Activated T-helper 2 cell treated with anti-CD3 and anti-CD28 coated beads, Interferon-gamma antibody, Interleukin-2, Interleukin-4, amounts not matched to agents 10 μg/mL and 5 μg/mL and 100 μg/mL, durations not matched to agents 14 hours and 24 hours and 36 hours (primary cell): ENCODE measurements at regions of chr11 and their contacts with region 1.

Region 1: GRCh38 chr11:33065445-33066178 is 26.2 kb downstream of the TCP11L1 start:
- DNase-seq: peak; percentile 54
- H3K4me3 Mint-ChIP-seq: no peak overlapping the region
- H3K27ac Mint-ChIP-seq: no peak overlapping the region
- H3K4me1 Mint-ChIP-seq: peaks cover 38% of the 10 kb centered on the region
- H3K27me3 Mint-ChIP-seq: no peaks in the 10 kb centered on the region

Region 2: DNA sequence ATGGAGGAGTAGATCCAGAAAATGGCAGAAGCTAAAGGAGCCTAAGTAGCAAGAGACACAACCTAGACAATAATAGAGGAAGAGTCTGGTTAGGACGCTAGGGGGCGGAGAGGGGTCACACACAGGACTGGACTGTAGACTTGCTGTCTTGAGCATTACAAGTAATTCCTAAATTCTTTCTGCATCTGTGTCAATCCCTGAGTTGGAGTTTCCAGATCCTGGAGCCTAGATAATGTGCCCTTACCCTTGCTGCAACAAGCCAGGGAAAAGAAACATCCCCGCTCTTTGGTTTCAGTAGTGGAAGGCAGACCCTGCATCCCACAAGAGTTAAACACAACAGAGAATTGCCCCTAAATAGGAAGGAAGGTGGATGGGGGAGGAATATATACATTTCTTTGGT is 256.3 kb before region 1 on chr11:
- intact Hi-C with region 1: loop called (anchors 1 kb)
- DNase-seq: peak; percentile 27
- H3K4me3 Mint-ChIP-seq: no peak overlapping the region
- H3K27ac Mint-ChIP-seq: no peak overlapping the region
- H3K4me1 Mint-ChIP-seq: no peaks in the 10 kb centered on the region
- H3K27me3 Mint-ChIP-seq: peaks cover 8% of the 10 kb centered on the region

Region 3: DNA sequence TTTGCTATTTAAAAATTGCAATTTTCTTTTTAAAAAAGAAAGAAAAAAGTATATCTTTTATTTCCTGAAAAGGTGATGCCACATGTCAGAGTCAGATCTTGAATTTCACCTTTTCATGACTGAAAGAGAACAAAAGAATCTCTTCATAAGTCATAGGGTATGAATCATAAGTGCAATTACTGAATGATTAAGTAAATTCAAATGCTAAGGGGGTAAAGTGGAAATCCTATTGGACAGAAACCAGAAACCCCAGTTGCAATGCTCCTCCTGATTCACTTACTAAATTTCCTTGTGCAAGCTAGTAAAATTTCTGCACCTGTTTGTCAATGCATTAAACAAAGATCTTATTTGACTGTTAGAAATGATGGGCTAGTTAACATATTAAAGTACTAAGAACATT is 244.1 kb before region 1 on chr11:
- intact Hi-C with region 1: loop called (anchors 5 kb)
- DNase-seq: no peak
- H3K4me3 Mint-ChIP-seq: no peak overlapping the region
- H3K27ac Mint-ChIP-seq: peak overlapping the region; percentile 32
- H3K4me1 Mint-ChIP-seq: peaks cover 19% of the 10 kb centered on the region
- H3K27me3 Mint-ChIP-seq: no peaks in the 10 kb centered on the region

Region 4: DNA sequence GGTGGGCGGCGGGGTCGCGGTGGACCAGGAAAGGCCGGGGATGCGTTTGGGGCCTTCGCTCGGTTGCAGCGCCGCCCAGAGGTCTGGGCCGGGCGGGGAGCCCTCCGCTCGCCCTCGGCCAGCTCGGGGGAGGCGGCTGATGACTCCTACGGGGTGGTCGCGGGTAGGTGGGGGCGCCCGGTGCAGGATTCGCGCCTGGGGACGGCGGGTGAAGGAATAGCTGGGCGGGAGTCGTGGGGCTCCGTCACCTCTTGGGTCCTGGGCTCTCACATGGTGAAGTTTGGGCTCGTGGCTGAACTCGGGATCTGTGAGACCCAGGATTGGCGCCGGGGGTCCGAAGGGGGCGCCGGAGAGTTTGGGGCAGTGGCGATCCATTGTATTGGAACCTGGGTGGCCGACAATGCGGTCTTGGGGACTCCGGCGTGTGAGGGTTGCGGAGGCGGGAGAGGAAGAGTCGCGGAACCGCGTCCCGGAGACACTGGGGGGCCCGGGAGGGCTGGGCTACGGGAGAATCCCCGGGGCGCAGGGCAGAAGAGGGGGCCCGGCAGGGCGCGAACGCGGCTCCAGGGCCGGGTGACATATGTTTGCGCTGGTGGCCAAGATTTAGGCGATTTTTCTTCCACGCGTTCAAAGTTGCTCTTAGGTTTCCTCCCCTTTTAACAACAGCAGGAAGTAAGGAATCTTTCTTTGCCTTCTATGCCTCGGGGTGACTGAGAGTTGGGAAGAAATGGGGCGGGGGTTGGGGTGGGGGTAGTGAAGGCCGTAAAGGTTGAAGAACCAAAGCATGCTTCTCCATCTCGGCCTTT is 172.1 kb before region 1 on chr11:
- intact Hi-C with region 1: loop called (anchors 1 kb)
- DNase-seq: peak; percentile 23
- H3K4me3 Mint-ChIP-seq: peak overlapping the region; percentile 98
- H3K27ac Mint-ChIP-seq: peak overlapping the region; percentile 95
- H3K4me1 Mint-ChIP-seq: peaks cover 27% of the 10 kb centered on the region
- H3K27me3 Mint-ChIP-seq: peaks cover 8% of the 10 kb centered on the region

Region 5: DNA sequence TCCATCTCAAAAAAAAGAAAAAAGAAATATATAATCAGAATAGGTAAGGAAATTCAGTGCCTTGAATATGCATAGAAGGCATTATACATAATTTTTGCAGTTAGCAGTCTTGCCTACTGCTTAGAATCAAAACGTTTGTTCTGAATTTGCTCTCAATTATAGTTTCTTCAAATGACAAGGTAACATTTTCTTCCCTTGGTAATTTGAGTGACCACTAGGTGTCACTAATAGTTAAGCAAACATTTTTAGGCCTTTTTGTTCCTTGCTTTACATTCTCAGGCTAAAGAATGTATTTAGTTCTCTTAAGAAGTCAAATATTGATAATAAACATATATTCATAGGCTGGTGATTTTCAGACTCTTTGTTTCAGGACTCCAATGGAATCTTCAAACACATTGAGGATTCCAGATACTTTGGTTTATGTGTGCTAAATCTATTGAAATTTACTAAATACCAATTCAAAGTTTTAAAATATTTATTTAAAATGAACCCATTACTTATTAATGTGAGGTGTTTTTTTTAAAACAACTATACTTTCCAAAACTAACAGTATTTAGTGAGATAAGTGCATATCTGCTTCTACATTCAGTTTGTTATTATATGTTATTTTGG is 105.0 kb before region 1 on chr11:
- intact Hi-C with region 1: loop called (anchors 1 kb)
- DNase-seq: no peak
- H3K4me3 Mint-ChIP-seq: no peak overlapping the region
- H3K27ac Mint-ChIP-seq: no peak overlapping the region
- H3K4me1 Mint-ChIP-seq: peaks cover 11% of the 10 kb centered on the region
- H3K27me3 Mint-ChIP-seq: no peaks in the 10 kb centered on the region

Region 6: DNA sequence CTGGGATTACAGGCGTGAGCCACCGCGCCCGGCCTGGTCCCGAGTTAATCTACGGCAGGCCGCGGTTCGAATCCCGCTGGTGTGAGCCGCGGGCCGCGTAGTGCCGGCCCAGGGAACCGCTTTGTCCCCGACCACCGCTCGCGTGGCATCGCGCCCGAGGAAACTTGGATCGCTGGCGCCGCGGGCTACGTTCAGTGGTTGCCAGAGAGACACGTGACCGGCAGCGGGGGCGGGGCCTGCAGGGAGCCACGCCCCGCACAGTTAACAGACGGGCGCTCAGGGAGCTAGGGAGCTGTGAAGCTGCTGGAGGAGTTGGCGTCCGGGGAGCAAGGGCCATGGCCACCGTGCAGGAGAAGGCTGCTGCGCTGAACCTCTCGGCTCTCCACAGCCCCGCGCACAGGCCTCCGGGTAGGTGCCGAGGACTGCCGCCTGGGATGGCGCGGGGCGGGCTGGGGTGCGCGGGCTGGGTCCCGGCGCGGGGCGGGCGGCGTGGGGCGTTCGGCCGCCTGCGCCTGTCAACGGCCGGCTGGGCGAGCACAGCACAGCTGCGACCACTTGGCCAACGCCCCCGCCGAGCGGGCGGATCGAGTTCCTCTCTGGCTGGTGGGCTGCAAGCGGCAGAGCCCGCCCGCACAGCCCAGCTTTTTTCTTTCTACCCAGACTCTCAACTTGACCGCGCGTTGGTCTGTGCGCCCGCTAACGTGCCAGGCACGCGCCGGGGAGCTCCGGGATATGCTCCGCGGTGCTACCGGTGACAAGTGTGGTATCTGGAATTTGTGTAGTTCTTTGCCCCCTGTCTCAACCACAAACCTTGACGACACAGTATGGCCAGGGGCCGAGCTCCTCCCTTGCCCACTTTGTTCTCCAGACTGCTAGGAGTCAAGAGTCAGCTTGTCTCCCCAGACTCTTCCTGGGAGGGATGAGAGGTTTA is 49.7 kb before region 1 on chr11 and contains the start of gene DEPDC7:
- intact Hi-C with region 1: loop called (anchors 1 kb)
- DNase-seq: peak; percentile 66
- H3K4me3 Mint-ChIP-seq: peak within 1 kb of the TSS; percentile 76
- H3K27ac Mint-ChIP-seq: no peak within 1 kb of the TSS
- H3K4me1 Mint-ChIP-seq: peaks cover 17% of the 10 kb centered on the region
- H3K27me3 Mint-ChIP-seq: peaks cover 56% of the 10 kb centered on the region
- total RNA-seq, gene DEPDC7: 0.57 and 0.82 TPM in 2 replicates

Region 7: GRCh38 chr11:33039274-33040032 is 26.2 kb before region 1 on chr11 and contains the start of gene TCP11L1:
- intact Hi-C with region 1: loop called (anchors 1 kb)
- DNase-seq: peak; percentile 74
- H3K4me3 Mint-ChIP-seq: peak within 1 kb of the TSS; percentile 91
- H3K27ac Mint-ChIP-seq: peak within 1 kb of the TSS; percentile 93
- H3K4me1 Mint-ChIP-seq: peaks cover 36% of the 10 kb centered on the region
- H3K27me3 Mint-ChIP-seq: peaks cover 18% of the 10 kb centered on the region
- total RNA-seq, gene TCP11L1: 12.4 and 13.8 TPM in 2 replicates

Region 8: GRCh38 chr11:33187998-33188722 is 122.5 kb after region 1 on chr11:
- intact Hi-C with region 1: no loop called
- DNase-seq: no peak
- H3K4me3 Mint-ChIP-seq: no peak overlapping the region
- H3K27ac Mint-ChIP-seq: no peak overlapping the region
- H3K4me1 Mint-ChIP-seq: no peaks in the 10 kb centered on the region
- H3K27me3 Mint-ChIP-seq: no peaks in the 10 kb centered on the region